Activated T-helper 2 cell treated with anti-CD3 and anti-CD28 coated beads, Interferon-gamma antibody, Interleukin-2, Interleukin-4, amounts not matched to agents 10 μg/mL and 5 μg/mL and 100 μg/mL, durations not matched to agents 14 hours and 24 hours and 36 hours (primary cell): ENCODE measurements at regions of chr9 and their contacts with region 1.

Region 1: DNA sequence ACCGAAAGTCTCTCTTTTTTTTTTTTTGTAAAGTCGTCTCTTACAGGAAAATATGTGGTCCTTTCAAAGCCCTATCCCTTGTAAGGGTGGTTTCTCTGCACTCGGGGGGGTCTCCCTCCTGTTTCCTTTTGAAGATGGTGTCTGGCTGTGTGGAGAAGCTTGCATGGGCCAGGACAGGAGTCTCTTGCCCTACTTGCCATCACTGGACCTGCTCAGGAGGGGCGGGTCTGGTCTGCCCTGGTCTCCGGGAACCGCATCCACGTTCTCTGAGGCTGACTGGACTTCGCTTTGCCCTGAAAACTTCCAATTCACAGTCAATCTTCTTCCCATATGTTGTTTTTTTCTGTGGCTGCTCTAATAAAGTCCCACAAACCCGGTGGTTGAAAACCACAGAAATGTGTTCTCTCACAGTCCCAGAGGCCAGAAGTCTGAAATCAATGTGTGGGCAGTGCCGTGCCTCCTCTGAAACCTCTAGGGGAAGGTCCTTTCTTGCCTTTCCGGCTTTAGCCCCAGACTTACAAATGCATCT is 92.9 kb upstream of the IER5L start:
- DNase-seq: no peak
- H3K4me3 Mint-ChIP-seq: peak overlapping the region; percentile 54
- H3K27ac Mint-ChIP-seq: peak overlapping the region; percentile 73
- H3K4me1 Mint-ChIP-seq: peaks cover 24% of the 10 kb centered on the region
- H3K27me3 Mint-ChIP-seq: peaks cover 19% of the 10 kb centered on the region

Region 2: GRCh38 chr9:129320575-129321263 is 49.8 kb after region 1 on chr9:
- intact Hi-C with region 1: loop called (anchors 2 kb)
- DNase-seq: peak; percentile 42
- H3K4me3 Mint-ChIP-seq: peak overlapping the region; percentile 73
- H3K27ac Mint-ChIP-seq: peak overlapping the region; percentile 82
- H3K4me1 Mint-ChIP-seq: peaks cover 20% of the 10 kb centered on the region
- H3K27me3 Mint-ChIP-seq: no peaks in the 10 kb centered on the region